ENCODE measurements at regions of chr16 and their contacts with region 1.

Region 1: GRCh38 chr16:7482032-7482431 is 149.4 kb downstream of the RBFOX1 start:
- DNase-seq: no peak
- ATAC-seq: peak in 2 of 8 donors; percentile 24 to 31
- H3K4me3 ChIP-seq: no peak overlapping the region
- H3K27ac ChIP-seq: no peak overlapping the region
- H3K4me1 ChIP-seq: no peaks in the 10 kb centered on the region
- H3K27me3 ChIP-seq: no peaks in the 10 kb centered on the region
- CTCF ChIP-seq: no peak

Region 2: GRCh38 chr16:7423434-7424044 is 58.5 kb before region 1 on chr16:
- intact Hi-C with region 1: no loop called
- DNase-seq: no peak
- ATAC-seq: no peak
- H3K4me3 ChIP-seq: no peak overlapping the region
- H3K27ac ChIP-seq: no peak overlapping the region
- H3K4me1 ChIP-seq: peaks cover 0 to 26% (median 3%) of the 10 kb centered on the region in 9 donors
- H3K27me3 ChIP-seq: no peaks in the 10 kb centered on the region
- CTCF ChIP-seq: no peak

Region 3: GRCh38 chr16:7545251-7545650 is 63.2 kb after region 1 on chr16:
- intact Hi-C with region 1: loop called in 1 of 10 experiments (anchors 10 kb)
- DNase-seq: no peak
- ATAC-seq: no peak
- H3K4me3 ChIP-seq: no peak overlapping the region
- H3K27ac ChIP-seq: no peak overlapping the region
- H3K4me1 ChIP-seq: peaks cover 0 to 4% (median 0%) of the 10 kb centered on the region in 9 donors
- H3K27me3 ChIP-seq: no peaks in the 10 kb centered on the region
- CTCF ChIP-seq: no peak